ENCODE measurements at regions of chr5 and their contacts with region 1.

Region 1: DNA sequence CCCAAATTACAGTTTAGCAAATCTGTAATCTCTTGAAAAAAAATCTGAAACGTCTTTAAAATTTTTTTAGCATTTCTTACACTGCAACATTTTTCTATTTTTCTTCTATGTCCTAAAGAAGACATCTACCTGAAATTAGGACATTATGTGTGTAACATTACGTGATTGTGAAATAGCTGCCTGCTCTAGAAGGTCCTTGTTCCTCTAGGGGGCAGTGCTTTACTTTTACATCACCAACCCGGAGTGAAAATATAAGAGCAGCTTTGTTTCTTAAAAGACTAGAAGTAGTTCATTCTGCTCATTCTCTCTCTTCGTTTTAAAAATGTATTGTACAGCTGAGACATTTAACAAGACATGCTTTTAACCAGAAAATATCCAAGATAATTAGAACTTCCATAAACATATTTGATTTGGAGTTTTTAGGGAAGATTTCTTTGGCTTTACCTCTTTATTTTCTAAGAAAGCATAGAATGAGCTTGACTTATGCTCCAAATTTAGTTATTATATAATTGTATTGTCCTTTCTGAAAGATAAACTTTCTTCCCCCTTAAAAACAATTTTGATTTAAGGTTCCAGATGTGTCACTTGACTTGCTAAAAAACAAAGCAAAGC is 48.1 kb upstream of the RIOK2 start:
- DNase-seq: peak; percentile 78
- H3K4me3 ChIP-seq: no peak overlapping the region
- H3K27ac ChIP-seq: no peak overlapping the region
- H3K4me1 ChIP-seq: peaks cover 6% of the 10 kb centered on the region
- H3K27me3 ChIP-seq: no peaks in the 10 kb centered on the region
- CTCF ChIP-seq: peak; percentile 54 to 69
- POLR2A ChIP-seq: no peak

Region 2: DNA sequence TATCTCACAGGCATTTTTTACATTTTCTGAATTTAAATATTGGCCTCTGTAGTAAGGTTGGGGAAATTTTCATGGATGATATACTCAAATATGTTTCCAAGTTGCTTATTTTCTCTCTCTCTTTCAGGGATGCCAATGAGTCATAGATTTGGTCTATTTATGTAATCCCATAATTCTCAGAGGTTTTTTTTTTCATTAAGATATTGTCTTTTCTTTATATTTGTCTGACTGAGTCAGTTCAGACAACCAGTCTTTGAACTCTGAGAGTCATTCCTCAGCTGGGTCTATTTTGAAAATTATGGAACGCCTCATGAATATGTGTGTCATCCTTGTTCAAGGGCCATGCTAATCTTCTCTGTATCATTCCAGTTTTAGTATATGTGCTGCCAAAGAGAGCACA is 1021.3 kb before region 1 on chr5:
- CTCF ChIA-PET with region 1: no interaction called
- POLR2A ChIA-PET with region 1: no interaction called
- dilution Hi-C with region 1: no loop called
- intact Hi-C with region 1: no loop called
- DNase-seq: peak; percentile 22
- H3K4me3 ChIP-seq: no peak overlapping the region
- H3K27ac ChIP-seq: no peak overlapping the region
- H3K4me1 ChIP-seq: no peaks in the 10 kb centered on the region
- H3K27me3 ChIP-seq: no peaks in the 10 kb centered on the region
- CTCF ChIP-seq: no peak
- POLR2A ChIP-seq: no peak

Region 3: DNA sequence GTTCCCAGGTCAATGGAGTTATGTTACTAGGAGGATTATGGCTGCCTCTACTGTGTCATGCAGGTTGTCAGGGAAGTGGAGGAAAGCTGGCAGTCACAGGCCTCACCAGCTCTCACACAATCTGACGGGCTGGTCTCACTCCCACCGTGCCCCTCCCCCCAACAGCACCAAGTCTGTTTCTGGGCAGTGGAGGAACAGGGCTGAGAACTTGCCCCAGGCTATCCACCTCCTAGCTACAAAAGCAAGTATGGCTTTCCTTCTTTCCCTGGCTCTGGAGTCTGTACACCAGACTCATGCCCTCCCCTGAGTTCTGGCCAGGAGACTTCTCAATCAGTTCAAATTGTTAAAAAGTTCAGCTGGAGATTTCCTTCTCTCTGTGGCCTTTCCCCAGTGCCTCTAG is 22.4 kb before region 1 on chr5:
- CTCF ChIA-PET with region 1: interaction called, 14 read pairs
- POLR2A ChIA-PET with region 1: no interaction called
- dilution Hi-C with region 1: no loop called
- intact Hi-C with region 1: no loop called
- DNase-seq: no peak
- H3K4me3 ChIP-seq: no peak overlapping the region
- H3K27ac ChIP-seq: no peak overlapping the region
- H3K4me1 ChIP-seq: no peaks in the 10 kb centered on the region
- H3K27me3 ChIP-seq: no peaks in the 10 kb centered on the region
- CTCF ChIP-seq: no peak
- POLR2A ChIP-seq: no peak

Region 4: DNA sequence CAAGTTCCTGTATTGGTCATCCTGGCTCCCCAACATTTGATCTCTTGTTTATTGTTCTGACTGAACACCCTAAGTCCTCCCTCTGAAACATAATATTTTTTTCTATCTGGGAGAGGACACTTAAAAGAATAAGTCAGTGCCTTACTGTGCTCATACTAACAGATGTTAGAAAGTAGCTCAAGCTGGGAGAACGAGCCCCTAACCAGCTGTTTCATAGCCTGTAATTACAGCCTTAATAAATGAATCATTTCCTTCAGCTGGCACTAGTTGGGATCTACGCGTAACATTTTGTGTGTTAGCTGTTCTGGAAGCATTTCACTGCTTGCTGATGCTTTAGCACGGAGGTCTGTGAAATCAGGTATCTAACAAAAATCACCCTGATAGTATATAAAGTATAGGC is 297.8 kb after region 1 on chr5:
- CTCF ChIA-PET with region 1: interaction called, 140 read pairs
- POLR2A ChIA-PET with region 1: no interaction called
- dilution Hi-C with region 1: no loop called
- intact Hi-C with region 1: loop called (anchors 1 kb)
- DNase-seq: peak; percentile 64
- H3K4me3 ChIP-seq: no peak overlapping the region
- H3K27ac ChIP-seq: peak overlapping the region; percentile 17
- H3K4me1 ChIP-seq: peaks cover 7% of the 10 kb centered on the region
- H3K27me3 ChIP-seq: no peaks in the 10 kb centered on the region
- CTCF ChIP-seq: no peak
- POLR2A ChIP-seq: no peak

Region 5: GRCh38 chr5:98401656-98402055 is 1170.5 kb after region 1 on chr5:
- CTCF ChIA-PET with region 1: interaction called, 3 read pairs
- POLR2A ChIA-PET with region 1: no interaction called
- dilution Hi-C with region 1: no loop called
- intact Hi-C with region 1: loop called (anchors 5 kb)
- DNase-seq: no peak
- H3K4me3 ChIP-seq: no peak overlapping the region
- H3K27ac ChIP-seq: no peak overlapping the region
- H3K4me1 ChIP-seq: no peaks in the 10 kb centered on the region
- H3K27me3 ChIP-seq: no peaks in the 10 kb centered on the region
- CTCF ChIP-seq: no peak
- POLR2A ChIP-seq: no peak

Region 6: DNA sequence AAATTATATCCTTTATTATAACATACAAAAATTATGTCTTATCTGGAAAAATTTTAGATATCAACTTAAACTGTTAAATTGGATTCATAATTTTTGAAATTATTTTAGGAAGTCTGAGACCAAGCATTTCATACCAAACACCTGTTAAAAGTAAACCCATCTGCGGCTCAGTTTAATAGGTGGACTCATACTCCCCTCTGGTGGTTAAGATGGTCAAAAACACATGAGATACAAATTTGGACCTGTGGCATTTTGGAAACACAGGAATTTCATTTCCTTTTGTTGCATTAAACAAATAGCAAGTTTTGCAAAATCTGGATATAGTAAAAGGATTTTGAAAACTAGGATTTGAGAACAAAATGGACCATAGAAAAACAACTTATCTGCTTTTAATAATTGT is 1596.0 kb after region 1 on chr5:
- CTCF ChIA-PET with region 1: interaction called, 22 read pairs
- POLR2A ChIA-PET with region 1: no interaction called
- dilution Hi-C with region 1: no loop called
- intact Hi-C with region 1: loop called (anchors 1 kb)
- DNase-seq: peak; percentile 49
- H3K4me3 ChIP-seq: no peak overlapping the region
- H3K27ac ChIP-seq: no peak overlapping the region
- H3K4me1 ChIP-seq: no peaks in the 10 kb centered on the region
- H3K27me3 ChIP-seq: no peaks in the 10 kb centered on the region
- CTCF ChIP-seq: peak; percentile 12 to 31
- POLR2A ChIP-seq: no peak